ENCODE measurements at regions of chr13 and their contacts with region 1.

Region 1: GRCh38 chr13:19863323-19864023 is at the start of gene ZMYM5:
- DNase-seq: peak; percentile 99
- ATAC-seq: peak; percentile 98
- total RNA-seq, gene ZMYM5: 7.5 TPM

Region 2: GRCh38 chr13:19633479-19634255 is 229.8 kb before region 1 on chr13 and contains the start of gene MPHOSPH8:
- intact Hi-C with region 1: loop called (anchors 1 kb)
- DNase-seq: peak; percentile 96
- ATAC-seq: peak; percentile 99
- total RNA-seq, gene MPHOSPH8: 25.0 TPM

Region 3: GRCh38 chr13:19782049-19782726 is 81.3 kb before region 1 on chr13:
- intact Hi-C with region 1: loop called (anchors 2 kb)
- DNase-seq: peak; percentile 82
- ATAC-seq: peak; percentile 71